Endothelial cell of umbilical vein (primary cell): ENCODE measurements at regions of chr6 and their contacts with region 1.

Region 1: GRCh38 chr6:27809939-27810767 is 102.0 kb downstream of the OR2B2 start:
- DNase-seq: peak; percentile 99
- H3K4me3 ChIP-seq: peak overlapping the region; percentile 4 to 77 (median 70)
- H3K27ac ChIP-seq: peak overlapping the region; percentile 59
- H3K4me1 ChIP-seq: peaks cover 29% of the 10 kb centered on the region
- H3K27me3 ChIP-seq: no peaks in the 10 kb centered on the region
- CTCF ChIP-seq: peak in 1 of 2 donors; percentile 25
- POLR2A ChIP-seq: peak; percentile 99

Region 2: GRCh38 chr6:26196846-26197648 is 1613.1 kb before region 1 on chr6:
- CTCF ChIA-PET with region 1: no interaction called
- POLR2A ChIA-PET with region 1: interaction called, 3 read pairs
- dilution Hi-C with region 1: no loop called
- intact Hi-C with region 1: loop called (anchors 5 kb)
- DNase-seq: peak; percentile 96
- H3K4me3 ChIP-seq: peak overlapping the region; percentile 1 to 98 (median 52)
- H3K27ac ChIP-seq: peak overlapping the region; percentile 94
- H3K4me1 ChIP-seq: peaks cover 19% of the 10 kb centered on the region
- H3K27me3 ChIP-seq: no peaks in the 10 kb centered on the region
- CTCF ChIP-seq: no peak
- POLR2A ChIP-seq: peak; percentile 97

Region 3: GRCh38 chr6:27132532-27133280 is 677.4 kb before region 1 on chr6:
- CTCF ChIA-PET with region 1: no interaction called
- POLR2A ChIA-PET with region 1: interaction called, 11 read pairs
- dilution Hi-C with region 1: no loop called
- intact Hi-C with region 1: loop called (anchors 2 kb)
- DNase-seq: peak; percentile 100
- H3K4me3 ChIP-seq: peak overlapping the region; percentile 37 to 81 (median 59)
- H3K27ac ChIP-seq: peak overlapping the region; percentile 86
- H3K4me1 ChIP-seq: peaks cover 19% of the 10 kb centered on the region
- H3K27me3 ChIP-seq: no peaks in the 10 kb centered on the region
- CTCF ChIP-seq: no peak
- POLR2A ChIP-seq: peak; percentile 76

Region 4: DNA sequence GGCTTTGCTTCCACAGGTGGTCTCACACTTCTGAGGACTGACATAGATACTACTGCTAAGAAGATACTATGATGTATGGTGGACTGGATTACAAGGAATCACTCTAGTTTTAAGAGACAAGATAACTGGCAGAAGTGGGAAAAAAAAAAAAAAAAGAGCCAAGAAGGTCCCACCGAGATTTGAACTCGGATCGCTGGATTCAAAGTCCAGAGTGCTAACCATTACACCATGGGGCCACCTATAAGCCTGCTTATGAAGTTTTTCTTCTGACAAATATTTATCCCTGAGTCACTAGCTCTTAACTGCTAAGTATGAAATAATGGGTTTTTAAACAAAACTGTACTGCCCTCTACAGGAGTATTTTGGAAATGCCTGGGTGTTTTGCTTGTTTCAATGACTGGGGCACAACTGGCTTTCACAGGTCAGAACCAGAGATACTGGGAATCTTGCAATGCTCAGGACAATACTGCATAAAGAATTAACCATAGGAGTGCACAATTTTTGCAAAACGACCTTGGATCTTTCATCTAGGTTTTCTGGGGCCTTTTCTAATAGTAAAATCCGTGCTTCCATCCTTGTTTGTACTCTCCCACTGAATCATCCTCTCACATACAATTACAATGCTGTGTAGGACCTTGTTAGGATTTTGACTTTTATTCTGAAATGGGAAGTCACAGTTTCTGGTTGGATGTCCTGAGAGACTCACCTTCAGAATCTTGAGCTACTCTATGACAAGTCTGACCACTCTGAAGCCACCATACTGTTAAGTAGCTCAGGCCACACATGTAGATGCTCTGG is 14.3 kb before region 1 on chr6:
- CTCF ChIA-PET with region 1: interaction called, 67 read pairs
- POLR2A ChIA-PET with region 1: interaction called, 6 read pairs
- dilution Hi-C with region 1: no loop called
- intact Hi-C with region 1: loop called (anchors 1 kb)
- DNase-seq: peak; percentile 95
- H3K4me3 ChIP-seq: no peak overlapping the region
- H3K27ac ChIP-seq: no peak overlapping the region
- H3K4me1 ChIP-seq: peaks cover 7% of the 10 kb centered on the region
- H3K27me3 ChIP-seq: no peaks in the 10 kb centered on the region
- CTCF ChIP-seq: peak; percentile 60 to 69
- POLR2A ChIP-seq: no peak

Region 5: DNA sequence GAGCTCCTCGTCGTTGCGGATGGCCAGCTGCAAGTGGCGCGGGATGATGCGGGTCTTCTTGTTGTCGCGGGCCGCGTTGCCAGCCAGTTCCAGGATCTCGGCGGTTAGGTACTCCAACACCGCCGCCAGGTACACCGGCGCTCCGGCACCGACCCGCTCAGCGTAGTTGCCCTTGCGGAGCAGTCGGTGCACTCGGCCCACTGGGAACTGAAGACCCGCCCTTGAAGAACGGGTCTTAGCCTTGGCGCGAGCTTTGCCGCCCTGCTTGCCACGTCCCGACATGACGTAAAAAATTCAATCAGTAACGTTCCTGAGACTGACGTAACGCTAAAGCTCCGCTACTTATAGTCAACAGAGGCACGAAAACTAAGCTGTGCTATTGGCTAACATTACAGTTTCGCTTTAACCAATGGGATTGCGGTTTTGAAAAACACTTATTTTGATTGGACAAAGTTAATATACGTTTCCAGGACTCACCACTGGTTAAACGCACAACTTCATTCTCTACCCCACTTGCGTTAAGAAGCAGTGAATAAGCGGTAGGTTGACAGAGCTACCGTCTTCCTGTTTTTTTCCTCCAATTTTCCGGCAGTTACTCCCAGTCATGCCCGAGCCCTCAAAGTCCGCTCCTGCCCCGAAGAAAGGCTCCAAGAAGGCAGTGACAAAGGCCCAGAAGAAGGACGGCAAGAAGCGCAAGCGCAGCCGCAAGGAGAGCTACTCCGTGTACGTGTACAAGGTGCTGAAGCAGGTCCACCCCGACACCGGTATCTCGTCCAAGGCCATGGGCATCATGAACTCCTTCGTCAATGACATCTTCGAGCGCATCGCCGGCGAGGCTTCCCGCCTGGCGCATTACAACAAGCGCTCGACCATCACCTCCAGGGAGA is 28.1 kb after region 1 on chr6:
- CTCF ChIA-PET with region 1: interaction called, 22 read pairs
- POLR2A ChIA-PET with region 1: interaction called, 56 read pairs
- dilution Hi-C with region 1: no loop called
- intact Hi-C with region 1: loop called (anchors 1 kb)
- DNase-seq: peak; percentile 100
- H3K4me3 ChIP-seq: peak overlapping the region; percentile 25 to 86 (median 59)
- H3K27ac ChIP-seq: peak overlapping the region; percentile 95
- H3K4me1 ChIP-seq: peaks cover 14% of the 10 kb centered on the region
- H3K27me3 ChIP-seq: no peaks in the 10 kb centered on the region
- CTCF ChIP-seq: no peak
- POLR2A ChIP-seq: peak; percentile 87

Region 6: DNA sequence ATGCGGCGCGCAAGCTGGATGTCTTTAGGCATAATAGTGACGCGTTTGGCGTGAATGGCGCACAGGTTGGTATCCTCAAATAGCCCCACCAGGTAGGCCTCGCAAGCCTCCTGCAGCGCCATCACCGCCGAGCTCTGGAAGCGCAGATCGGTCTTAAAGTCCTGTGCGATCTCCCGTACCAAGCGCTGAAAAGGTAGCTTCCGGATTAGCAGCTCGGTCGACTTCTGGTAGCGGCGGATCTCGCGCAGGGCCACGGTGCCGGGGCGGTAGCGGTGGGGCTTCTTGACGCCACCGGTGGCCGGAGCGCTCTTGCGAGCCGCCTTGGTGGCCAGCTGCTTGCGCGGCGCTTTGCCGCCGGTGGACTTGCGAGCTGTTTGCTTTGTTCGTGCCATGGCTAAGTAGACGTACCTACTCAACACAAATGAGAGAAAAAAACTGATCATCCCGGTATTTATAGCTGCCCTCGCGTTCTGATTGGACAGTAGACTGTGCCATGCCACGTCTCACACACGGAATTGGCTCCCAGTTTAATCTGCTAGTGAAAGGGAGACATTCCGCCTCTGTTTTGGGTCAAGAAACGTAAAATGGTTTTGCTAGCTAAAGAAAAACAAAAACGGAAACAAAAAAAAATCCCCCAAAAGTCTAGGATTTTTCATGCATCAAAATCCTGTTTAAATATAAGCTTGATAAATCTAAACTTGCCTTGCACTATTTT is 61.9 kb after region 1 on chr6:
- CTCF ChIA-PET with region 1: interaction called, 10 read pairs
- POLR2A ChIA-PET with region 1: interaction called, 37 read pairs
- dilution Hi-C with region 1: no loop called
- intact Hi-C with region 1: loop called (anchors 1 kb)
- DNase-seq: peak; percentile 99
- H3K4me3 ChIP-seq: peak overlapping the region; percentile 65 to 96 (median 82)
- H3K27ac ChIP-seq: peak overlapping the region; percentile 80
- H3K4me1 ChIP-seq: peaks cover 16% of the 10 kb centered on the region
- H3K27me3 ChIP-seq: no peaks in the 10 kb centered on the region
- CTCF ChIP-seq: peak in 1 of 2 donors; percentile 37
- POLR2A ChIP-seq: peak; percentile 94